ENCODE measurements at regions of chr5 and their contacts with region 1.

Region 1: DNA sequence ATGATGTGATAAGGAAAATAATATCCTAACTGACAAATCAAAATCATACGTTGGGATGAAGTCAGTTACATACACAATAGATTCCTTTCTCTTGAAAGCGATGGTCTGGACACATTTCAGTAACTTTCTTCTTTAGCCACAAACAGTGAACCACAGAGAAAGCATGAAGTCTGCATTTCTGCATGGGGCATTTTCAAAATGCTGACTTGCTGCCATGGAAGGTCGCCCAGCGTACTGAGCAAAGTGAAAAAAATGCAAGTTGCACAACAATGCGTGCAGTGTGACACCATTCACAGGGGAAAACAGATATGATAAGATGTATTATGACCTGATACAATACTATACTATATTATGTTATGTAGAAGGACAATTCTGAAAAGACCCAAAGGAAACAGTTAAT is 146.3 kb downstream of the SNX18 start:
- DNase-seq: peak in 5 of 10 donors; percentile 21 to 86 (median 50)

Region 2: GRCh38 chr5:54553659-54554207 is 110.1 kb before region 1 on chr5:
- intact Hi-C with region 1: loop called (anchors 10 kb)
- DNase-seq: peak; percentile 29 to 95 (median 62)

Region 3: DNA sequence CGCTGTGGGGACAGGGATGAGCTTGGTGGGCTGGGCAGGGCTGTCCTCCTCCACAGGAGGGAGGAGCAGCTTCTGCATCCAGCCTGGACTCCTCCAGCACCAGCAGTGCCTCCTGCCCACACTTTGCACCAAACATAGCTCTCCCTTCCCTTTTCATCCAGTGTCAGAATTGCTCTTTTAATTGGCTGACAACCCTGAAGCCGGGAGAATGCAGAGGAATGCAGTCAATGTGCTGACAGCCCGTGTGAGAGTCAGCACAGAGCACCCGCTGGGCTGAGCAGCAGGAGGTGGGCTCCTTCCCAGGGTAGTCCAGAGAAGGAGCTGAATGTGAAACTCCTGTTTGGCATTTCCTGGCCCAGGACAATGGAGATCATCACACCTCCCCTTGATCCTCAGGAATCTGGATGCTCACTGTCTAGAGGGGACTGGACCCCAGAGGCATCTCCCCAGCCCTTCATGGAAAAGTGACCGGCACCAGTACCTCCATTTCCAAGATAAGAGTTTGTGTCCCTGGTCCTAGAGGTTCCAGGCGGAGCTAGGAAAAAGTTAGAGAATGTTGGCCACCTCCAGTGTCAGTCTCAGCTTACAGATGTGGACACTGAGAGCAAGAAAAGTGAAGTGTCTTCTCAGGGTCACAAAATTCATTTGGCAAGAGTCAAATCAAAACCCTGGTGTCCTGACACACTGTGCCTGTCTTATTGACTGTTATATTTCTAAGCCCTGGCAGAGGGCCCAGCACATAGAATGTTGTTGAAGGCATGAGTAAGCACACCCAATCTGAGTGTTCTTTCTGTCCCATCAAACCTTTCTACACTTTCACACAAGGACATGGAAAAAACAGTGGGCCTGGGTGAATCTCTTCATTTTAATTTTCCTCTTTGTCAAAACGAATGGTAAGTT is 55.8 kb after region 1 on chr5:
- intact Hi-C with region 1: no loop called
- DNase-seq: peak in 5 of 10 donors; percentile 27 to 87 (median 72)

Region 4: DNA sequence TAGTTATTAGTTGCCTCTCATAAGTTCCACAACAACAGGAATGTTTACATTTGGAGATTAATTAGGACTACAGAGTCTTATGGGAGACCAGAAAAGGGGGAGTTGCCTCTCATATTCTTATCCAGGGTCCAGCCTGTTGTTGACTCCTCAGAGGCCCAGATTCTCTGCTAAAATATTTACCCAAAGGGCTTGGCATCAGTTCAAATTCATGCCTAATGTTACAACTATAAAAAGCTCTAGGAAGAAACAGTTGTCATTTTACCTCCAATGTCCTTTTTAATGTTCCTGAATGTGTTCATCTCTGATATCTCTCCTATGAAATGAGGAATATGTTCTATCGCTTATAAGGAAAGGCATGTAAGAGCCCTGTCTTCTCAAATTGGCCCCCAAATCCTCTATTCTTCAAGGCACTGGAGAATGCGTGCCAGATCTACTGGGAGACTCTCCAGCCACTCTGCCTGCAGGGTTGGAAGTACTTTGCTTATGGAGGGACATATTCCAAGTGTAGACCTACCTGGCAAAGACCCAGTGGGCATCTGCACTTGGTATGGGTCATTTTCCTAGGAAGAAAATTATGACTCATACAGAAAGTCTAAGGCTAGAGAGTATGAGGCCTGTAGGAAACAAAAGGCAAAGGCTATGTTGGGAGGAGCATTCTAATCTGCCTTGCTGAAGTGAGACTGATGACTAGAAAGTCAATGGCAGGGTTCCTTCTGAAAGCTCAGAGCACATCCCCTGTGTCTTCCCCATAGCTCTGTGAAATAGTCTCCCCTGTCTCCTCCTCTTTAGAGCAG is 128.9 kb after region 1 on chr5:
- intact Hi-C with region 1: no loop called
- DNase-seq: no peak

Region 5: GRCh38 chr5:54844905-54845566 is 181.2 kb after region 1 on chr5:
- intact Hi-C with region 1: loop called (anchors 10 kb)
- DNase-seq: no peak

Region 6: DNA sequence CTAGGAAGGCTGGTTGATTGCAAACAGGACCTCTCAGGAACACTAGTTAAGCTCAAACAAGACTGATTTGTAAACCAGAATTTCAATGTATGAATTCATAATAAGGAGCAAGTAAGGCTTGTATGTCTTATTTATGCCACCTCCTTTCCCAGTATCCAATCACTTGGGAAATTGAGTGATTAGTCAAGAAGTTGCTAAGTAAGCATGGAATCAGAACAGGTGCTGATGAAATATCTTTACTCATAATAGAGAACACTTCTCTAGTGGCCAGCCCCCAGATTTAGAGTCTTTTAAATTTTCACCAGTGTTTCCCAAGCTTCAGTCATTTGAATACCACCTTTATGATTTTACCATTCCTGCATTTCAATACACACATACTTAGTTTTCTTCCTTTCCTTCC is 1068.7 kb after region 1 on chr5:
- intact Hi-C with region 1: no loop called
- DNase-seq: no peak